ENCODE measurements at regions of chr12 and their contacts with region 1.

Region 1: GRCh38 chr12:118061011-118061875 is at the start of gene WSB2:
- DNase-seq: peak; percentile 86
- H3K4me3 ChIP-seq: peak within 1 kb of the TSS; percentile 81 to 89 (median 84)
- H3K27ac ChIP-seq: peak within 1 kb of the TSS; percentile 94 to 98 (median 98)
- H3K4me1 ChIP-seq: peaks cover 0 to 38% (median 32%) of the 10 kb centered on the region in 4 donors
- H3K27me3 ChIP-seq: no peaks in the 10 kb centered on the region
- CTCF ChIP-seq: no peak
- EP300 ChIP-seq: no peak
- POLR2A ChIP-seq: no peak
- total RNA-seq, gene WSB2: 50.2 to 64.0 (median 55.6) TPM

Region 2: DNA sequence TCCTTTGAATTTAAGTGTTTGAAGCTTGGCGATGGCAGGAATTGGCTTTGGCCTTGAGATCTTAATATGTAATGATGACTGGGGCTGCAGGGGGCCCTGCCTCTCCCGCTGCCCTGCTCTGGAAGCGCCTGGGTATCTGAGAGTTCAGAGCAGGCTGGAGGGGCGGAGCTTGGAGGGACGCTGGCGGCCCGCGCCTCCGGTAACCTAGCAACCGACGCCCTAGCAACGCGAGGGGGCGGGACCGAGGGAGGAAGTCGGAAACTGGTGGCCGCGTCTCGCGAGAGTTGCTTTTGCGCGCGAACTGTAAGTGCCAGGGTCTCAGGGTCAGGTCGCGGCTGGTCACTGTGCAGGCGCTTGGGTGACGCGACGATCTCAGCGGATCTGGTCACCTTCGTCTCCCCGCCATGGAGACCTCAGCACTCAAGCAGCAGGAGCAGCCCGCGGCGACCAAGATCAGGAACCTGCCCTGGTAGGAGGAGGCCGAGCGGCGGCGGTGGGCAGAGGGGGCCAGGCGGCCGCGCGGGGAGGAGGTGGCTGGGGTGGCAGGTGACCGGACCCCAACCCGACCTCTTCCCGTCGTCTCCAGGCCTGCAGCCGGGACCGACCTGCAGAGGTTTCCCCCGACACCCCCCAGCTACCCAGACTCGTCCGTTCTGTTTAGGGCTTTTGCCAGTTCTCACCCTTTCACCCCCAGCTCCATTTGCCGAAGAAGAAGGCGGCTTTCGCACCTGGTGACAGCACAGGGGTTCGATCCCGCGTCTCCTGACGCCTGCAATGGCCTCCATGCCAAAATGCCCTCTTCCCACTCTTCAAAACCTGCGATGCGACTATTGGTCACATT is 44.6 kb before region 1 on chr12 and contains the start of gene RFC5:
- intact Hi-C with region 1: loop called (anchors 1 kb)
- DNase-seq: peak; percentile 98
- H3K4me3 ChIP-seq: peak within 1 kb of the TSS; percentile 85 to 95 (median 90)
- H3K27ac ChIP-seq: peak within 1 kb of the TSS; percentile 44 to 72 (median 60)
- H3K4me1 ChIP-seq: peaks cover 0 to 17% (median 14%) of the 10 kb centered on the region in 4 donors
- H3K27me3 ChIP-seq: no peaks in the 10 kb centered on the region
- CTCF ChIP-seq: no peak
- EP300 ChIP-seq: no peak
- POLR2A ChIP-seq: no peak
- total RNA-seq, gene RFC5: 6.9 to 12.7 (median 9.7) TPM

Region 3: DNA sequence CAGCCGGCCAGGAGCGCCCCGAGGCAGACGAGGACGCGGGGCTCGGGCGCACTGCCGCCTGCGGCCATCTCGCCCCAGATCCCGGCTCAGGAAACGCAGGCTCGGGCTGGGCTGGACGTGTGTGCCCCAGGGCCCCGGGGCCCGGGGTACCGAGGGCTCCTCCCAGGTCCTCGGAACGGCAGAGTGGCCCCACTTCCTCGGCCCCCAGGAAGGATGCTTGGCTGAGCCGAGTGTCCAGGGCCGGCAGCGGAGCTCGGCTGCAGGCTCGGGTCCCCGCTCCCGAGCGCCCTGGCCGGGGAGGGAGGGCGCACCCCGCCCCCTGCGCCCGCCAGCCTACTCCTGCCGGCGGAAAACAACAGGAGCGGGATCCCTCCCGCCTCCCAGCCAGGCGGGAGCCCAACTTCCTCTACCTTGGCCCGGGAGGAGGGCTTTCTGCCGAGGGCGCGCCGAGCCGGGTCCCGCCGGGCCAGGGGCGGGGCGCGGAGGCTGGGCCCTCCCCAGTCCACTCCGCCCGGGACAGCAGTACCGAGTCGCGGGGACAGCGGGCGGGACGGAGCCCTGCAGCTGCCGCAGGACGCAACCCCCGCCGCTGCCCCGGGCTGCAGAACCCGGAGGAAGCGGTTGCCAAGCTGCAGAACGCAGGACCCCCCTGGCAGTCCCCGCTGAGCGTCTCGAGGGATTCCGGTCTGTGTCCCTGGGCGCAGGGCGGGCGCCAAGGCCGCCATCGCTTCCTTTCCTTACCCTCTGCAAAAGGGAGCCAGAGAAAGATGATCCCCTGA is 42.5 kb after region 1 on chr12 and contains the start of gene VSIG10:
- intact Hi-C with region 1: loop called (anchors 2 kb)
- DNase-seq: peak; percentile 91
- H3K4me3 ChIP-seq: peak within 1 kb of the TSS; percentile 69 to 97 (median 76)
- H3K27ac ChIP-seq: peak within 1 kb of the TSS; percentile 78 to 85 (median 80)
- H3K4me1 ChIP-seq: peaks cover 3 to 17% (median 8%) of the 10 kb centered on the region in 4 donors
- H3K27me3 ChIP-seq: no peaks in the 10 kb centered on the region
- CTCF ChIP-seq: no peak
- EP300 ChIP-seq: no peak
- POLR2A ChIP-seq: peak in 1 of 2 donors; percentile 61
- total RNA-seq, gene VSIG10: 22.2 to 31.1 (median 23.5) TPM

Region 4: GRCh38 chr12:118120579-118121363 is 59.5 kb after region 1 on chr12:
- intact Hi-C with region 1: loop called (anchors 5 kb)
- DNase-seq: peak; percentile 84
- H3K4me3 ChIP-seq: no peak overlapping the region
- H3K27ac ChIP-seq: peak overlapping the region in 2 of 4 donors; percentile 19 to 38
- H3K4me1 ChIP-seq: peaks cover 0 to 8% (median 6%) of the 10 kb centered on the region in 4 donors
- H3K27me3 ChIP-seq: no peaks in the 10 kb centered on the region
- CTCF ChIP-seq: peak in 2 of 4 experiments; percentile 15 to 70
- EP300 ChIP-seq: no peak
- POLR2A ChIP-seq: no peak

Region 5: GRCh38 chr12:118189741-118190191 is 128.5 kb after region 1 on chr12:
- intact Hi-C with region 1: loop called (anchors 5 kb)
- DNase-seq: peak; percentile 65
- H3K4me3 ChIP-seq: peak overlapping the region; percentile 18 to 50 (median 45)
- H3K27ac ChIP-seq: peak overlapping the region; percentile 79 to 85 (median 82)
- H3K4me1 ChIP-seq: peaks cover 0 to 39% (median 19%) of the 10 kb centered on the region in 4 donors
- H3K27me3 ChIP-seq: no peaks in the 10 kb centered on the region
- CTCF ChIP-seq: no peak
- EP300 ChIP-seq: no peak
- POLR2A ChIP-seq: no peak

Region 6: GRCh38 chr12:118537481-118537917 is 476.3 kb after region 1 on chr12:
- intact Hi-C with region 1: loop called (anchors 10 kb)
- DNase-seq: peak; percentile 88
- H3K4me3 ChIP-seq: no peak overlapping the region
- H3K27ac ChIP-seq: peak overlapping the region; percentile 81 to 93 (median 89)
- H3K4me1 ChIP-seq: peaks cover 0 to 48% (median 40%) of the 10 kb centered on the region in 4 donors
- H3K27me3 ChIP-seq: no peaks in the 10 kb centered on the region
- CTCF ChIP-seq: no peak
- EP300 ChIP-seq: peak; percentile 98 to 100 (median 99)
- POLR2A ChIP-seq: no peak

Measured in sigmoid colon (tissue), 7 donors.